Left cardiac atrium (tissue), 4 donors: ENCODE measurements at regions of chr11 and their contacts with region 1.

Region 1: DNA sequence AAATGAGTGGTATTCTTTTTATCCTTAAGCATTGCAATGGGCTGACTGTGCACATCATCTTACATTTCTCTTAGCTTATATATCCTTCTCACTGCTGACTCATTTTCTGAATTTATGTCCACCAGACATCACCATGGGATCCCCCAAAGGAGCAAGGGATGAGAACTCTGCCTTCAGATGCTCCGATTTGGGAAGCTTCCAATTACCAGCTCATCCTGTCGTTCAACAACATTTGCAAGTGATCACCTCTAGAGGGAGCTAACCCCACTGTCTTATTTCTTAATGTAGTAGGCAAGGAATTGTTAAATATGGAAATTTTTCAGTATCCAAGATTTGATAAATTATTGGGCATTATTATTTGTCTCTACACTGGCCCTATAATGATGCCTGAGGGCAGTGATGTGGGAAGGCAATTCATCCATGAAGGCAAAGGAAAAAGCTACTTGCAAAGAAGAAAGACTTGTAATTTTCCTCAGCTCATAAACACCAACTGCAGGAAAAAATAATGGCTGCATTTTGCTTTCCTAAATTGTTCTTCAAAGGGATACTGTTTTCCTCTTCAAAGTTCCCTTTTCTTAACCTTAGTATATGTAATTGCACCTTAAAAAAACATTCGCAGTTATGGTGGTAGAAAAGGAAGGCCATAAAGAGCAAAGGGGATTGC is 102.4 kb upstream of the FSHB start:
- DNase-seq: no peak
- ATAC-seq: no peak

Region 2: GRCh38 chr11:30196400-30197206 is 68.2 kb after region 1 on chr11:
- intact Hi-C with region 1: loop called in 1 of 2 experiments (anchors 5 kb)
- DNase-seq: peak; percentile 69
- ATAC-seq: peak; percentile 82 to 87